ENCODE measurements at regions of chr1 and their contacts with region 1.

Region 1: DNA sequence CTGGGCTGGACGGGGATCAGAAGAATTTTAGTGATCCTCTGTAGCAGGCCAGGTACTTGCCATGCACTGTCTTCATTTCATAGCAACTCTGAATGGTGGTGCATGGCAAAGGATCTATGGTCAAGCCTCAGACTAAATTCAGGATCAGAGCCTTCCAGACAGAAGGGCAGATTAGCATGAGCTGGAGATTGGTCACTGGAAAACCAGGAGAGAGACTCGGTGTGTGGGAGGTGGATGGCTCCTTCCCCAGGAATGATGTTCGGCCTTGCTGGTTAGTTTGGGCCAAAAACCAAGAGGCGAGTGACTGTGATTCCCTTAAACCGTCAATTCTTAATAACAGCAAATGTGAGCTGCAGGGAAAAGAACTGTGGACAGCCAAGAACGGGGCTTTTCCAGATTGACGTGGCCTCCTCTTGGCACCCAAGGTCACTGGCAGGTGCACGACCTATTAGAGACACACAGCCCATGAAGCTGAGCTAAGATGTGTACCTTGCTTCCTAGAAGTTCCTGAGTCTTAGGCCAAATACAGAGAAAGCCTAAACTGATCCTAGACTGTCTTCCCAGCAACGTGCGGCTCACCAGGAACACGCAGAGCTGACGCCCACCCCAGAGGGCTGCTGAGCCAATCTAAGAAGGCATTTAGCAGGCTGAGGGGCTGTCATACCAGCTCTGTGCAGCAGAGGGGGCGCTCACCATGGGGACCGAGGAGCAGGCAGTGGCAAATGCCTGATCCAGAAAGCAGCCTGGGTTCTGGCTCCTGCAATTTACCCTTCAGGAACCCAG is 18.5 kb downstream of the ALDH4A1 start:
- DNase-seq: peak; percentile 60 to 70
- ATAC-seq: peak; percentile 24 to 78
- H3K4me3 ChIP-seq: no peak overlapping the region
- H3K27ac ChIP-seq: peak overlapping the region in 1 of 4 donors; percentile 81
- H3K4me1 ChIP-seq: peaks cover 21 to 31% of the 10 kb centered on the region in 2 donors
- H3K27me3 ChIP-seq: no peaks in the 10 kb centered on the region
- CTCF ChIP-seq: peak; percentile 87 to 92 (median 90)
- POLR2A ChIP-seq: no peak

Region 2: GRCh38 chr1:17098446-17099251 is 1785.2 kb before region 1 on chr1:
- in situ Hi-C with region 1: no loop called
- intact Hi-C with region 1: loop called (anchors 5 kb)
- DNase-seq: peak; percentile 98 to 100
- ATAC-seq: peak; percentile 76 to 84
- H3K4me3 ChIP-seq: no peak overlapping the region
- H3K27ac ChIP-seq: peak overlapping the region; percentile 89 to 97 (median 96)
- H3K4me1 ChIP-seq: peaks cover 55 to 88% of the 10 kb centered on the region in 2 donors
- H3K27me3 ChIP-seq: no peaks in the 10 kb centered on the region
- CTCF ChIP-seq: no peak
- POLR2A ChIP-seq: peak in 1 of 2 donors; percentile 17

Region 3: GRCh38 chr1:18828224-18828623 is 55.6 kb before region 1 on chr1:
- in situ Hi-C with region 1: no loop called
- intact Hi-C with region 1: no loop called
- DNase-seq: no peak
- ATAC-seq: no peak
- H3K4me3 ChIP-seq: no peak overlapping the region
- H3K27ac ChIP-seq: no peak overlapping the region
- H3K4me1 ChIP-seq: no peaks in the 10 kb centered on the region
- H3K27me3 ChIP-seq: peaks cover 0 to 8% (median 4%) of the 10 kb centered on the region in 3 donors
- CTCF ChIP-seq: no peak
- POLR2A ChIP-seq: no peak

Region 4: GRCh38 chr1:18913065-18913835 is 29.4 kb after region 1 on chr1:
- in situ Hi-C with region 1: no loop called
- intact Hi-C with region 1: loop called (anchors 1 kb)
- DNase-seq: peak; percentile 56 to 71
- ATAC-seq: peak; percentile 83 to 86
- H3K4me3 ChIP-seq: peak overlapping the region in 1 of 4 donors; percentile 13
- H3K27ac ChIP-seq: peak overlapping the region; percentile 15 to 71 (median 52)
- H3K4me1 ChIP-seq: peaks cover 4 to 5% of the 10 kb centered on the region in 2 donors
- H3K27me3 ChIP-seq: no peaks in the 10 kb centered on the region
- CTCF ChIP-seq: peak; percentile 87 to 94 (median 91)
- POLR2A ChIP-seq: no peak

Region 5: GRCh38 chr1:19096036-19096833 is 212.4 kb after region 1 on chr1:
- in situ Hi-C with region 1: no loop called
- intact Hi-C with region 1: loop called (anchors 1 kb)
- DNase-seq: no peak
- ATAC-seq: peak; percentile 43 to 76
- H3K4me3 ChIP-seq: no peak overlapping the region
- H3K27ac ChIP-seq: no peak overlapping the region
- H3K4me1 ChIP-seq: peaks cover 11 to 15% of the 10 kb centered on the region in 2 donors
- H3K27me3 ChIP-seq: no peaks in the 10 kb centered on the region
- CTCF ChIP-seq: peak; percentile 19 to 61 (median 50)
- POLR2A ChIP-seq: no peak

Region 6: DNA sequence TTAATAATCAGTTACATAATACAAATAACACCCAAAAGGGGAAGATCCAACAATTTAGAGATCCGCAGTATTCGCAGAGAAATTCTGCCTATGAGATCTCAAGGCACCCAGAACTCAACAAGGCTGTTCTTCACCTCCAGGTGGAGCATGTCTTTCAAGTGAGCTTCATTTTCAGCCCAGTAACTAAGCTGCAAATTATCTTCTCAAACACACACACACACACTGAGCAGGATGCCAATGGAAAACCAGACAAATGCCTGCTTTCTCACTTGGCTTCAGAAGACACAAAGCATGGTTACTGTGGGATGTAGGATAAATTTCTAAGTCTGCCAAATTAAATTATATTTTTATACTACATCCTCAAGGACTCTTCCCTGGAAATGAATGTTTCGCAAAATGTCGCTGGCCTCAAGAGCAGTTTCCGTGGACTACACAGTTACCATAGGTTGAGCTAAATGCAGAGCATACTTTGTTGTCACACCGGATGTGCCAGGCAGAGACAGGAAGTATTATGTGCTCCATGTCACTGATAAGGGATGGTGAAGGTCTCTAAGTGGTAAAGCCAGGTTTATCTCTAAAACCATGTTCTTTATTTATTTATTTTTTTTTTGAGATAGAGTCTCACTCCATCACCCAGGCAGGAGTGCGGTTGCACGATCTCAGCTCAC is 295.9 kb after region 1 on chr1:
- in situ Hi-C with region 1: no loop called
- intact Hi-C with region 1: no loop called
- DNase-seq: no peak
- ATAC-seq: no peak
- H3K4me3 ChIP-seq: no peak overlapping the region
- H3K27ac ChIP-seq: no peak overlapping the region
- H3K4me1 ChIP-seq: no peaks in the 10 kb centered on the region
- H3K27me3 ChIP-seq: no peaks in the 10 kb centered on the region
- CTCF ChIP-seq: peak in 1 of 5 experiments; percentile 13
- POLR2A ChIP-seq: no peak

Measured in gastrocnemius medialis (tissue), 4 donors.